K562 (cell line): ENCODE measurements at regions of chr10 and their contacts with region 1.

Region 1: DNA sequence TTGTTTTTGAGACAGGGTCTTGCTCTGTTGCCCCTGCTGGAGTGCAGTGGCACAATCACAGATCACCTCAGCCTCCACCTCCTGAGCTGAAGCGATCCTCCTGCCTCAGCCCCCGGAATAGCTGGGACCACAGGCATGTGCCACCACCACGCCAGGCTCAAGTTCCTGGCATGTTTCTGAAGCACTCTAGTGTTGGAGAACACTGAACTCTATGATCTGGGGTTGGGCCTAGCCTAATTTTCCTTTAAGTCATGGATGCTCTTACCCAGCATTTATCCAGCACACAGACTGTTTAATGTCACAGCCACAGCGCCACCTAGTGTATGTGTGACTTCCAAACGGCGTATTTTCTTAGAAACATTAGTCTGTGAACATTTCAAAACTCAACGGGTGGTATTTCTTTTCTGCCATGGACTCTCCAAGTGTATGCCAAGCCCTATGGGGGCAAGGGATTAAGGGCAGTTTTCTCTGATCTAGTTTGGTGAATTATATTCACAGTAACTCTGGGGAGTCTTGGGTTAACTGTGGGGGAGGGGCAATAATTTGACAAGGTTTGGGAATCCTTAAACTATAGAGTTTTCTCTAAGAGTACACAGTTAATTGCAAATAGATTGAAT is 91.8 kb downstream of the CREM start:
- DNase-seq: peak; percentile 43 to 90 (median 58)
- ATAC-seq: peak; percentile 87
- H3K4me3 ChIP-seq: no peak overlapping the region
- H3K27ac ChIP-seq: no peak overlapping the region
- H3K4me1 ChIP-seq: peaks cover 0 to 4% of the 10 kb centered on the region in 2 experiments; a peak in 1 of 5 replicates
- H3K27me3 ChIP-seq: no peaks in the 10 kb centered on the region
- CTCF ChIP-seq: peak; percentile 77 to 91 (median 81)
- EP300 ChIP-seq: no peak
- POLR2A ChIP-seq: no peak
- RAD21 ChIP-seq: peak; percentile 86 to 92

Region 2: DNA sequence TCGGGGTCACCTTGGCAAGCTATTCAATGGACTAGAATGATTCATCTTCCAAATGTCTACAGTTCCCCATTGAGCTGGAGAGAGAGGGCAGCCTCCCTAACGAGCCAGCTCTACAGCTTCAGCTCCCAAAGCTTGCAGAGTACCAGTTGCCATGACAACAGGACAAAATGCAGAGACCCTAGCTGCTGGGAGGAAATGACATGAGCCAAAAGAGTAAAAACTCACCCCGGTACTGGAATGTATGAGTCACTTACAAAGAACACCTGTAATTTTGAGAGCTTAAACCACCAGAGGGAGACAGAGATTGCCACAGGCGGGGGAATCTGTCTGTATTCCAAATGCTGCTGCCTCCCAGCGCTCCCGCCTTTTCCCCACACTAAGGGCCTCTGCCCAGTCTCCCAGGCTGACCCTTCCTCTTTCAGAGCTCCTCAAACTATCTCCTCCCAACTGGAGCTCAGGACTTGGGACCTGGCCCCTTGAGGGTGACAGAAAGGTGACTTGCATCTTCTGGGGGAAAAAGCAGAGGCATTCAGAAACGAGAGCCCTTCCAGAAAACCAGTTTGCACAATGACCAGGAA is 223.8 kb before region 1 on chr10:
- CTCF ChIA-PET with region 1: interaction called, 7 read pairs
- POLR2A ChIA-PET with region 1: no interaction called
- in situ Hi-C with region 1: no loop called
- intact Hi-C with region 1: loop called (anchors 2 kb)
- DNase-seq: peak; percentile 56 to 72 (median 64)
- ATAC-seq: peak; percentile 89
- H3K4me3 ChIP-seq: no peak overlapping the region
- H3K27ac ChIP-seq: no peak overlapping the region
- H3K4me1 ChIP-seq: no peaks in the 10 kb centered on the region
- H3K27me3 ChIP-seq: no peaks in the 10 kb centered on the region; a peak in 1 of 5 replicates
- CTCF ChIP-seq: peak; percentile 81 to 88 (median 82)
- EP300 ChIP-seq: no peak
- POLR2A ChIP-seq: no peak
- RAD21 ChIP-seq: peak; percentile 57 to 84

Region 3: GRCh38 chr10:35119378-35119777 is 99.1 kb before region 1 on chr10:
- CTCF ChIA-PET with region 1: interaction called, 19 read pairs
- POLR2A ChIA-PET with region 1: interaction called, 4 read pairs
- in situ Hi-C with region 1: loop called (anchors 5 kb)
- intact Hi-C with region 1: loop called (anchors 1 kb)
- DNase-seq: no peak
- ATAC-seq: no peak
- H3K4me3 ChIP-seq: no peak overlapping the region
- H3K27ac ChIP-seq: no peak overlapping the region
- H3K4me1 ChIP-seq: peaks cover 0 to 5% of the 10 kb centered on the region in 2 experiments; a peak in 2 of 5 replicates
- H3K27me3 ChIP-seq: no peaks in the 10 kb centered on the region
- CTCF ChIP-seq: no peak
- EP300 ChIP-seq: no peak
- POLR2A ChIP-seq: no peak
- RAD21 ChIP-seq: no peak

Region 4: DNA sequence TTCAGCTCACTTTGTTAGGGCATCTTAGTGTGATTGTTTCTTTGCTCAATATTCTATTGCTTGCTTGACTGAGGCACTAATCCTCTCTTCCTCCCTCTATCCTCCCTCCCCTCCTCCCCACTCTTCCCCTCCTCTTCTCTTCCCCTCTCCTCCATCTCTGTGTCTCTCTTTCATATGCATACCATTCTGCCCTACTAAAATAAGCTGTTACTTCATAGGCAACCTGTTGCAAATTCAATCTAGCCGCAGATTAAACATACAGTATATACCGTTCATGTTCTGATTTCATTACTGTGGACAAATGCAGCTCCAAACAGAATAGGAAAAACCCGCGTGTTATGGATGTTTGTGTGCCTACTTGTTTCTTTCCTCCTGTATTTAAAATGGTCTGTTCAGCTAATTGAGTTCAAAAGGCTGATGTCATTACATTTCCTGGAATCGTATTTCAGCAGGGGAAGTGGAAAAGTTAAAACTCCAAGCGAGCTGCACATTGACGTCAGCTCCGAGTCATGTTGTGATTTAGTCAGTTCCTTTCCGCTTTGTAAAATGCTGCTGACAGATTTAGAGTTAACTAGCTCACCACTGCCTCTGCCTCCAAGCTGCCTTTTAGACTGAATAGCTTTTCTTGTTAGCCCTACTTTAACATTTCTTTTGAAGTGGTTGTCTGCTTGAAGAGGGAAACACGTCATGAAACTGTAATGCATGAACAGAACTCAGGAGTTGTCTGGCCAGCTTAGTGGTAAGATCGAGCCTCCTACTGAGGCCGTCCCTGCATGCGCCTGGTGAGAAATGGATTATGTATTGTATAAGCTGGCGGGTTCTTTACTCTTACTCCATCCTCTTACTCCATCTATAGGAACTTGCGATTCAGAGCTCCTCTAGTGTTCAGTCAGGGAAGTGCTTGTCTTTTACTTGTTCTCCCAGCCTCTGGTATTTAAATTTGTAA is 22.8 kb before region 1 on chr10:
- CTCF ChIA-PET with region 1: interaction called, 3 read pairs
- POLR2A ChIA-PET with region 1: interaction called, 12 read pairs
- in situ Hi-C with region 1: no loop called
- intact Hi-C with region 1: no loop called
- DNase-seq: peak; percentile 46 to 88 (median 56)
- ATAC-seq: peak; percentile 89
- H3K4me3 ChIP-seq: peak overlapping the region; percentile 38
- H3K27ac ChIP-seq: peak overlapping the region; percentile 87
- H3K4me1 ChIP-seq: peaks cover 0 to 23% of the 10 kb centered on the region in 2 experiments; a peak in 4 of 5 replicates
- H3K27me3 ChIP-seq: no peaks in the 10 kb centered on the region
- CTCF ChIP-seq: peak; percentile 82 to 83 (median 83)
- EP300 ChIP-seq: peak; percentile 29; the same call in 1 of the 2 replicates
- POLR2A ChIP-seq: 0 out of 2 replicates have a peak, but pooled peaks have one; percentile 52
- RAD21 ChIP-seq: peak; percentile 45 to 67

Region 5: DNA sequence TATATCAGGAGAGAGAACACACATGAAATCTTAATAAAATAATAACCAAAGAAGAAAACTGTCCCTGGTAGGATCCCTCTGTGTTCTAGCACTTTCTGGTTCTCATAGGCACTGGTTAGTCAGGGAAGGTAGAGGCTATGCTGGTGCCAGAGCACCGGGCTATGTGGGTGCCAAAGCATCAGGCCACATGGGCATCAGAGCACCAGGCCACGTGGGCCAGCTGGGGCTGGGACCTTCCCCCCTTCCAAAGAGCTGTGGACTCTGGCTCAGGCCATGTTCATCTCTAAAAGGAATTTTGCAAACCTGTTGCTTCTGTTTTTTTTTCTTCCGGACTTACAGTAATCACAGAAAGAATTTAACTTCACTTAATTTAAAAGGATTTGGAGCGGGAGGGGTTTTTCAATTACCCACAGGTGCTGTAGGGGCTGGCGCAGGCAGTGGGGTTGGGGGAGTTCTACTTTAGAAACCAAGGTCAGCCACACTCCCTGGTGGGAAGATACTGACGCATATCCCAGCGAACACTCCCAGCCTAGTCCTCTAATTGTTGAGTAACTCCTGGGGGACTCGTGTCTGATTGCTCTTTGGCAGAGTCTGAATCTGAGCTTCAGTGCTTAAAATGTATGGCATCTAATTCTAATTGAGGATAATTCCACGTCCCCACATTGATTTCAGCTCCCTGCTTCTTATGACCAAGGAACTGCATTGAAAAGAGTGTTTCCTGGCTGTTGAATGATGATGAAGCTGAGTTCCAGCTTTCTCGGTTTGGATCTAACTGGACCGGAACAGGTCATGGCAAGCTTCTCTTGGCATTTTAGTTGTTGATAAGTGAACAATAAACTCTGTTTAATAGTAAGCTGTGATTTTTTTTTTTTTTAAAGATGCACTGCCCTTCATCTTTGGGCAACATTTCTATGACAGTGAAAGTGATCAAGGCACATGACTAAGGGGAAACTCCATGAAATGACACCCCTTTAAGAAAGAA is 534.3 kb after region 1 on chr10:
- CTCF ChIA-PET with region 1: no interaction called
- POLR2A ChIA-PET with region 1: no interaction called
- in situ Hi-C with region 1: no loop called
- intact Hi-C with region 1: no loop called
- DNase-seq: no peak
- ATAC-seq: no peak
- H3K4me3 ChIP-seq: no peak overlapping the region
- H3K27ac ChIP-seq: no peak overlapping the region
- H3K4me1 ChIP-seq: no peaks in the 10 kb centered on the region
- H3K27me3 ChIP-seq: no peaks in the 10 kb centered on the region
- CTCF ChIP-seq: no peak
- EP300 ChIP-seq: no peak
- POLR2A ChIP-seq: no peak
- RAD21 ChIP-seq: no peak